GM23248 (cell line): ENCODE measurements at regions of chr6 and their contacts with region 1.

Region 1: DNA sequence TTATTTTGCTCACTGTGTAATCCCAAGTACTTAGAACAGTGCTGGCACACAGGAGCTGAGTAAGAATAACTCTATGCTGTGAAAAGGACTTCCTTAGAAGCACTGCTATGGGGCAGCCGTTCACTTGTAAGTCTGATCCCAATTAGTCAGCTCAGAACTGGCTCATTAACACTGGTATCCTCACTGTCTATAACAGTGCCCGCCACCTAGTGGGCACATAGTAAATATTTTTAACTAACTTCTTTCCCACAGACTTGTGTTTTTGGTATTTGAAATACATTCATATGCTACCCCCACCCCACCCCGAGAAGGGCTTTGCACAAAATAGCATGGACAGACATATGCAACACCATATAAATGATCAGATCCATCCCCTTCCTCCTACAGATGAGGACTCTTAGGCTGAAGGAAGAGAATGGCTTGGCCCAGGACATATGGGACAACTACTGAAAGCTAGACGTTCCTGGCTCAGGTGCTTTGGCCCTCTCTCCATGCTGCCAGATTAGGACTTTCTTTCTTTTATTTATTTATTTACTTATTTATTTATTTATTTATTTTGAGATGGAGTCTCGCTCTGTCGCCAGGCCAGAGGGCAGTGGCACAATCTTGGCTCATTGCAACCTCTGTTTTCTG is 47.1 kb downstream of the DST start:
- DNase-seq: peak; percentile 77
- H3K4me3 ChIP-seq: no peak overlapping the region
- H3K27ac ChIP-seq: peak overlapping the region; percentile 19; the same call in 1 of the 2 replicates
- H3K4me1 ChIP-seq: peaks cover 9% of the 10 kb centered on the region; the same call in 1 of the 2 replicates
- H3K27me3 ChIP-seq: no peaks in the 10 kb centered on the region

Region 2: GRCh38 chr6:56359201-56359899 is 236.3 kb before region 1 on chr6:
- in situ Hi-C with region 1: loop called (anchors 10 kb)
- DNase-seq: peak; percentile 77
- H3K4me3 ChIP-seq: no peak overlapping the region
- H3K27ac ChIP-seq: no peak overlapping the region
- H3K4me1 ChIP-seq: peaks cover 28% of the 10 kb centered on the region
- H3K27me3 ChIP-seq: no peaks in the 10 kb centered on the region